PC-9 (cell line): ENCODE measurements at regions of chr3 and their contacts with region 1.

Region 1: GRCh38 chr3:145898487-145898886 is 262.5 kb downstream of the PLOD2 start:
- DNase-seq: no peak
- H3K4me3 ChIP-seq: peak overlapping the region; percentile 24; the same call in 1 of the 2 replicates
- H3K27ac ChIP-seq: no peak overlapping the region
- H3K4me1 ChIP-seq: no peaks in the 10 kb centered on the region
- H3K27me3 ChIP-seq: no peaks in the 10 kb centered on the region
- CTCF ChIP-seq: no peak

Region 2: DNA sequence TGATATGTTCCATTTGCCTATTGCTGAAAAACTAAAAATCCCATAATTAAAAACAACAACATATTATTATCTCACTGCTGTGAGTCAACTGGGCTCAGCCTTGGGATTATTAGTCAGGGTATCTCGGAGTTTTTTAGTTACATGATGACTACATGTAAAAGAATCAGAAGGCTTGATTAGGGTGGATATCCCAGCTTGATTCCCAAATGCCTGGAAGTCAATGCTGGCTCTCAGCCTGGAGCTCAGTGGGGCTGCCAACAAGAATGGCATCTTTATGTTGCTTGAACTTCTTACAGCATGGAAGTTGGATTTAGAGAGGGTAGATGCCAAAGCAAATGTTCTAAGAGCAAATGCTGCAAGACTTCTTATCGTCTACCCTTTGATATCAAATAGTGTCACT is 16.1 kb before region 1 on chr3:
- CTCF ChIA-PET with region 1: no interaction called
- POLR2A ChIA-PET with region 1: interaction called, 10 read pairs
- intact Hi-C with region 1: no loop called
- DNase-seq: no peak
- H3K4me3 ChIP-seq: no peak overlapping the region
- H3K27ac ChIP-seq: no peak overlapping the region
- H3K4me1 ChIP-seq: no peaks in the 10 kb centered on the region
- H3K27me3 ChIP-seq: no peaks in the 10 kb centered on the region
- CTCF ChIP-seq: no peak